ENCODE measurements at regions of chr1 and their contacts with region 1.

Region 1: GRCh38 chr1:179365320-179366092 is at the start of gene AXDND1:
- DNase-seq: peak; percentile 80 to 96 (median 94)
- ATAC-seq: peak; percentile 95
- H3K4me3 ChIP-seq: peak within 1 kb of the TSS; percentile 91
- H3K4me3 Mint-ChIP-seq: peak within 1 kb of the TSS; percentile 82 to 99 (median 94)
- H3K27ac ChIP-seq: peak within 1 kb of the TSS; percentile 91
- H3K27ac Mint-ChIP-seq: peak within 1 kb of the TSS; percentile 99 to 100 (median 100)
- H3K4me1 ChIP-seq: peaks cover 5 to 8% of the 10 kb centered on the region in 2 donors
- H3K4me1 Mint-ChIP-seq: peaks cover 4 to 21% (median 14%) of the 10 kb centered on the region in 7 donors
- H3K27me3 ChIP-seq: no peaks in the 10 kb centered on the region
- H3K27me3 Mint-ChIP-seq: peaks cover 0 to 10% (median 0%) of the 10 kb centered on the region in 5 donors
- total RNA-seq, gene AXDND1: 0.98 to 2.3 (median 1.3) TPM in 3 of 5 experiments, not detected in the others

Region 2: GRCh38 chr1:178542560-178543356 is 822.7 kb before region 1 on chr1:
- CTCF ChIA-PET with region 1: interaction called, 3 read pairs
- POLR2A ChIA-PET with region 1: no interaction called
- intact Hi-C with region 1: loop called (anchors 1 to 2 kb)
- DNase-seq: peak; percentile 61 to 98 (median 87)
- ATAC-seq: peak; percentile 96
- H3K4me3 ChIP-seq: peak overlapping the region; percentile 99
- H3K4me3 Mint-ChIP-seq: peak overlapping the region; percentile 89 to 96 (median 92)
- H3K27ac ChIP-seq: peak overlapping the region; percentile 56
- H3K27ac Mint-ChIP-seq: peak overlapping the region; percentile 32 to 88 (median 83)
- H3K4me1 ChIP-seq: peaks cover 0 to 5% of the 10 kb centered on the region in 2 donors
- H3K4me1 Mint-ChIP-seq: peaks cover 0 to 15% (median 10%) of the 10 kb centered on the region in 7 donors
- H3K27me3 ChIP-seq: no peaks in the 10 kb centered on the region
- H3K27me3 Mint-ChIP-seq: no peaks in the 10 kb centered on the region

Region 3: GRCh38 chr1:179025125-179025974 is 340.2 kb before region 1 on chr1 and contains the start of gene FAM20B:
- CTCF ChIA-PET with region 1: no interaction called
- POLR2A ChIA-PET with region 1: interaction called, 5 read pairs
- intact Hi-C with region 1: loop called (anchors 1 kb)
- DNase-seq: peak; percentile 80 to 89 (median 86)
- ATAC-seq: peak; percentile 95
- H3K4me3 ChIP-seq: peak within 1 kb of the TSS; percentile 71
- H3K4me3 Mint-ChIP-seq: peak within 1 kb of the TSS; percentile 87 to 98 (median 91)
- H3K27ac ChIP-seq: peak within 1 kb of the TSS; percentile 84
- H3K27ac Mint-ChIP-seq: peak within 1 kb of the TSS; percentile 86 to 92 (median 89)
- H3K4me1 ChIP-seq: peaks cover 10 to 17% of the 10 kb centered on the region in 2 donors
- H3K4me1 Mint-ChIP-seq: peaks cover 35 to 60% (median 50%) of the 10 kb centered on the region in 7 donors
- H3K27me3 ChIP-seq: no peaks in the 10 kb centered on the region
- H3K27me3 Mint-ChIP-seq: peaks cover 0 to 31% (median 0%) of the 10 kb centered on the region in 5 donors
- total RNA-seq, gene FAM20B: 14.3 to 27.9 (median 25.2) TPM

Region 4: GRCh38 chr1:179121159-179121938 is 244.2 kb before region 1 on chr1:
- CTCF ChIA-PET with region 1: interaction called, 20 read pairs
- POLR2A ChIA-PET with region 1: interaction called, 3 read pairs
- intact Hi-C with region 1: loop called (anchors 1 kb)
- DNase-seq: peak in 7 of 9 donors; percentile 22 to 58 (median 46)
- ATAC-seq: peak; percentile 47
- H3K4me3 ChIP-seq: no peak overlapping the region
- H3K4me3 Mint-ChIP-seq: no peak overlapping the region
- H3K27ac ChIP-seq: no peak overlapping the region
- H3K27ac Mint-ChIP-seq: no peak overlapping the region
- H3K4me1 ChIP-seq: no peaks in the 10 kb centered on the region
- H3K4me1 Mint-ChIP-seq: peaks cover 0 to 12% (median 3%) of the 10 kb centered on the region in 7 donors
- H3K27me3 ChIP-seq: no peaks in the 10 kb centered on the region
- H3K27me3 Mint-ChIP-seq: no peaks in the 10 kb centered on the region

Region 5: DNA sequence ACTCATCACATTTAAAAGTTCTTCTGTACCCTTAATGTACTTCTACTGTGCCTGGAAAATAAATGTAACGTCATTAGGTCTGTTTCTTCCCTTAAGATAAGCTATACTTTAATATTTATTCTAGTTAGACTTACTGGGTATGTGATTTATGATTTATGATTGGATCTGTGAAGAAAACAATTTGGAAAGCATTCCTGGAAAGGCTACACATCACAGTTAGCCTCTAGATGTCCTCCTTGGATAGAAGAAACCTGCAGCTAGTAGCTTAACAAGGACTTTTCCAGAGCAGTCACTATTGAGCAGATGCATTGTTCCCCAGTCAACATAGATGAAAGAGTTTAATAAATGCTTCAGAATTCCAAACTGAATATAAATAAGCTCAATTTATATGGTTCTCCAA is 113.8 kb before region 1 on chr1:
- CTCF ChIA-PET with region 1: interaction called, 16 read pairs
- POLR2A ChIA-PET with region 1: interaction called, 5 read pairs
- intact Hi-C with region 1: loop called in 1 of 2 experiments (anchors 1 kb)
- DNase-seq: peak in 3 of 9 donors; percentile 9 to 22 (median 12)
- ATAC-seq: no peak
- H3K4me3 ChIP-seq: no peak overlapping the region
- H3K4me3 Mint-ChIP-seq: no peak overlapping the region
- H3K27ac ChIP-seq: no peak overlapping the region
- H3K27ac Mint-ChIP-seq: peak overlapping the region in 1 of 9 donors; percentile 26
- H3K4me1 ChIP-seq: no peaks in the 10 kb centered on the region
- H3K4me1 Mint-ChIP-seq: no peaks in the 10 kb centered on the region
- H3K27me3 ChIP-seq: no peaks in the 10 kb centered on the region
- H3K27me3 Mint-ChIP-seq: no peaks in the 10 kb centered on the region

Region 6: DNA sequence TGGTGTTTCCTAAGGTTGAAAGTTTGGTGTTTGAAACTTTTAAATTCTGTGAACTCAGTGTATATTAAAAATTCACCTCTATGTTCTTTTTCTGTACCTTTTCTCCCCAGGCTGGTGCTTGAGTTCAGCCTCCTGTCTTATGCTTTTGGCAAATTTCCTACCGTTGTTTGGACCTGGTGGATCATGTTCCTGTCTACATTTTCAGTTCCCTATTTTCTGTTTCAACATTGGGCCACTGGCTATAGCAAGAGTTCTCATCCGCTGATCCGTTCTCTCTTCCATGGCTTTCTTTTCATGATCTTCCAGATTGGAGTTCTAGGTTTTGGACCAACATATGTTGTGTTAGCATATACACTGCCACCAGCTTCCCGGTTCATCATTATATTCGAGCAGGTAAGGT is 24.6 kb before region 1 on chr1:
- CTCF ChIA-PET with region 1: no interaction called
- POLR2A ChIA-PET with region 1: no interaction called
- intact Hi-C with region 1: loop called in 1 of 2 experiments (anchors 1 kb)
- DNase-seq: no peak
- ATAC-seq: no peak
- H3K4me3 ChIP-seq: no peak overlapping the region
- H3K4me3 Mint-ChIP-seq: no peak overlapping the region
- H3K27ac ChIP-seq: no peak overlapping the region
- H3K27ac Mint-ChIP-seq: peak overlapping the region in 1 of 9 donors; percentile 77
- H3K4me1 ChIP-seq: no peaks in the 10 kb centered on the region
- H3K4me1 Mint-ChIP-seq: peaks cover 0 to 3% (median 0%) of the 10 kb centered on the region in 7 donors
- H3K27me3 ChIP-seq: no peaks in the 10 kb centered on the region
- H3K27me3 Mint-ChIP-seq: no peaks in the 10 kb centered on the region

Region 7: DNA sequence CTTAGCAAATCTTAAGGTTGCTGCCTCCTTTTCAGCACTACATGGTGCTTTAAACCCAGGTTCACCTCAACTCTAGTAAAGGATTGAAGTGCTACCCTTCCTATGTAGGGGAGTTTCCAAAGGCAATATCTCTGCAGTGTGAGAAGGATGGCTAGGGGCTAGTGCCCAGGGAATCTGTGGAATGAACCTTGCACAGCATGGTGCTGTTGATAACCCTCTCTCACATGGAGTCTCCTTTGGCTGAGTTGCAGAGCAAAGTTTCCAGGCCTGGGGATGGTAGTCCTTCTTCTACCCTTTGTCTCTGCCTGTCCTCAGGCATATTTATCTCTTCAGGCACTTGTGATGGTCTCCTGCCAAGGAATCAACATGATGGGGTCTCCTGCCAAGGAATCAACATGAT is 59.7 kb after region 1 on chr1:
- CTCF ChIA-PET with region 1: no interaction called
- POLR2A ChIA-PET with region 1: no interaction called
- intact Hi-C with region 1: no loop called
- DNase-seq: no peak
- ATAC-seq: no peak
- H3K4me3 ChIP-seq: no peak overlapping the region
- H3K4me3 Mint-ChIP-seq: no peak overlapping the region
- H3K27ac ChIP-seq: no peak overlapping the region
- H3K27ac Mint-ChIP-seq: no peak overlapping the region
- H3K4me1 ChIP-seq: no peaks in the 10 kb centered on the region
- H3K4me1 Mint-ChIP-seq: no peaks in the 10 kb centered on the region
- H3K27me3 ChIP-seq: no peaks in the 10 kb centered on the region
- H3K27me3 Mint-ChIP-seq: peaks cover 0 to 13% (median 0%) of the 10 kb centered on the region in 5 donors

Region 8: GRCh38 chr1:179599623-179600249 is 234.2 kb after region 1 on chr1:
- CTCF ChIA-PET with region 1: no interaction called
- POLR2A ChIA-PET with region 1: no interaction called
- intact Hi-C with region 1: no loop called
- DNase-seq: peak in 1 of 9 donors; percentile 3
- ATAC-seq: peak; percentile 29
- H3K4me3 ChIP-seq: no peak overlapping the region
- H3K4me3 Mint-ChIP-seq: no peak overlapping the region
- H3K27ac ChIP-seq: no peak overlapping the region
- H3K27ac Mint-ChIP-seq: no peak overlapping the region
- H3K4me1 ChIP-seq: no peaks in the 10 kb centered on the region
- H3K4me1 Mint-ChIP-seq: no peaks in the 10 kb centered on the region
- H3K27me3 ChIP-seq: no peaks in the 10 kb centered on the region
- H3K27me3 Mint-ChIP-seq: peaks cover 12 to 47% (median 26%) of the 10 kb centered on the region in 5 donors

Region 9: DNA sequence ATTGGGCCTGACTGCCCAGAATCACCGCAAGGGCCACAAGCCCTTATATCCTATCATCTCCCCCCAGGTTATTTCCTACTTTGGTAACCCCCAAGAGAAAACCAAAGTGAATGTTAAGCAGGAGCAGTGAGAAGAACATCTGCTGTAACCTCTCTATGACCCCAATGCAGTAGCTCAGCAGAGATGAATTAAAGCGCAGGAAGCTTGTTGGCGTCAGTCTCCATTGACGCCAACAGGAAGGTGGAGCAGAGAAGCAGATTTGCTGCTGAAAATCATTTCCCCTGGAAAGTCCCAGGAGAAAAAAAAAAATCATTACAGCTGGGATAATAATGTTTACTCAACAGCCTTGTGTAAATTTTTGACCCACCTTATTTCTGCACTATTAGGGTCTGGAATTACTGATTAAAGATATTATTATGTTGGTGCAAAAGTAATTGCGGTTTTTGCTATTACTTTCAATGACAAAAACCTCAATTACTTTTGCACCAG is 344.4 kb after region 1 on chr1:
- CTCF ChIA-PET with region 1: no interaction called
- POLR2A ChIA-PET with region 1: no interaction called
- intact Hi-C with region 1: no loop called
- DNase-seq: peak in 7 of 9 donors; percentile 53 to 85 (median 72)
- ATAC-seq: peak; percentile 96
- H3K4me3 ChIP-seq: no peak overlapping the region
- H3K4me3 Mint-ChIP-seq: peak overlapping the region in 5 of 10 donors; percentile 2 to 40 (median 31)
- H3K27ac ChIP-seq: peak overlapping the region; percentile 69
- H3K27ac Mint-ChIP-seq: peak overlapping the region in 7 of 9 donors; percentile 8 to 89 (median 81)
- H3K4me1 ChIP-seq: peaks cover 0 to 15% of the 10 kb centered on the region in 2 donors
- H3K4me1 Mint-ChIP-seq: peaks cover 6 to 25% (median 14%) of the 10 kb centered on the region in 7 donors
- H3K27me3 ChIP-seq: no peaks in the 10 kb centered on the region
- H3K27me3 Mint-ChIP-seq: peaks cover 0 to 3% (median 0%) of the 10 kb centered on the region in 5 donors

Region 10: GRCh38 chr1:180154325-180155181 is 789.0 kb after region 1 on chr1 and contains the start of gene QSOX1:
- CTCF ChIA-PET with region 1: no interaction called
- POLR2A ChIA-PET with region 1: no interaction called
- intact Hi-C with region 1: loop called (anchors 10 kb)
- DNase-seq: peak; percentile 81 to 89 (median 86)
- ATAC-seq: peak; percentile 97
- H3K4me3 ChIP-seq: peak within 1 kb of the TSS; percentile 94
- H3K4me3 Mint-ChIP-seq: peak within 1 kb of the TSS; percentile 80 to 99 (median 91)
- H3K27ac ChIP-seq: peak within 1 kb of the TSS; percentile 78
- H3K27ac Mint-ChIP-seq: peak within 1 kb of the TSS; percentile 81 to 95 (median 86)
- H3K4me1 ChIP-seq: peaks cover 7 to 20% of the 10 kb centered on the region in 2 donors
- H3K4me1 Mint-ChIP-seq: peaks cover 24 to 45% (median 37%) of the 10 kb centered on the region in 7 donors
- H3K27me3 ChIP-seq: no peaks in the 10 kb centered on the region
- H3K27me3 Mint-ChIP-seq: no peaks in the 10 kb centered on the region
- total RNA-seq, gene QSOX1: 22.1 to 55.6 (median 25.6) TPM